ENCODE measurements at regions of chr5 and their contacts with region 1.

Region 1: GRCh38 chr5:94218374-94218773 is 400.0 kb downstream of the KIAA0825 start:
- DNase-seq: peak; percentile 42 to 63
- H3K4me3 ChIP-seq: no peak overlapping the region
- H3K4me3 Mint-ChIP-seq: peak overlapping the region; percentile 14
- H3K27ac Mint-ChIP-seq: peak overlapping the region; percentile 81
- H3K4me1 ChIP-seq: peaks cover 48% of the 10 kb centered on the region
- H3K4me1 Mint-ChIP-seq: peaks cover 46% of the 10 kb centered on the region
- H3K27me3 ChIP-seq: no peaks in the 10 kb centered on the region
- H3K27me3 Mint-ChIP-seq: no peaks in the 10 kb centered on the region
- CTCF ChIP-seq: no peak

Region 2: DNA sequence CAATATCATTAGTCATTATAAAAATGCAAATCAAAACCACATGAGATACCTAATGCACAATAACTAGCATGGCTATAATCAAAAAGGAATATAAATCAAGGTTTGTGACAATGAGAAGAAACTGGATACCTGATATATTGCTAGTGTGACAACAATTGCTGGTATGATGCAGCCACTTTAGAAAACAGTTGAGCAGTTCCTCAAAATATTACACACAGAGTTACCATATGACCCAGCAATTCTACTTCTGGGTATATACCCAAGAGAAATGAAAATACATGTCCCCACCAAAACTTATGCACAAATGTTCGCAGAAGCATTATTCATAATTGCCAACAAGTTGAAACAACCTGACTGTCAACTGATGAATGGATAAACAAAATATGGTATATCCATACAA is 137.3 kb before region 1 on chr5:
- CTCF ChIA-PET with region 1: no interaction called
- POLR2A ChIA-PET with region 1: no interaction called
- intact Hi-C with region 1: no loop called
- DNase-seq: no peak
- H3K4me3 ChIP-seq: no peak overlapping the region
- H3K4me3 Mint-ChIP-seq: no peak overlapping the region
- H3K27ac Mint-ChIP-seq: no peak overlapping the region
- H3K4me1 ChIP-seq: no peaks in the 10 kb centered on the region
- H3K4me1 Mint-ChIP-seq: no peaks in the 10 kb centered on the region
- H3K27me3 ChIP-seq: no peaks in the 10 kb centered on the region
- H3K27me3 Mint-ChIP-seq: no peaks in the 10 kb centered on the region
- CTCF ChIP-seq: no peak

Region 3: DNA sequence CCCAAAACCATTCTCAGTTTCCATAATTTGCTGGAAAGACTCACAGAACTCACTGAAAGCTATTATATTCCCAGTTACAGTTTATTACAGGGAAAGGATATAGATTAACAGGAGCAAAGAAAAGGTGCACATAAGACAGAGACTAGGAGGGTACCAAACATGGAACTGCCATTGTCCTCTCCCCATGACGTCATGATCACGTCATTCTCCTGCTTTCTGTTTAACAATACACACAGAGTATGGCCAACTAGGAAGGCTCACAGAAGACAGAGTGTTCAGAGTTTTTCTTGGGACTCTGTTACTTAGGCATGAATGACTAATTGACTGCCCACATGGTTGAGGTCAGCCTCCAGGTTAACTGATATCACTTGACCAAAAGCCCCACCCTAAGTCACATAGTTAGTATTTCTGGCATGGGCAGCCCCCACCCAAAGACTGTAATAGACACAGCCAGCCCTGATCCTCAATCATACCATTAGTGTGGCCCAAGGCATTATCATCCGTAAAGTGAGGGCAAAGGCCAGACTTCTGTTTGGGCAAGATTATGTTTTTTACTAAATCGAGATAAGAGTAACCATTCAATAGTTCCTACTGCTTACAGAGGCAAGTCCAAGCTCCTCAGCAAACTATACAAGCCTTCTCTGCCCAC is 123.5 kb before region 1 on chr5:
- CTCF ChIA-PET with region 1: no interaction called
- POLR2A ChIA-PET with region 1: no interaction called
- intact Hi-C with region 1: loop called (anchors 1 kb)
- DNase-seq: peak; percentile 86 to 93
- H3K4me3 ChIP-seq: no peak overlapping the region
- H3K4me3 Mint-ChIP-seq: peak overlapping the region; percentile 2
- H3K27ac Mint-ChIP-seq: peak overlapping the region; percentile 65
- H3K4me1 ChIP-seq: peaks cover 33% of the 10 kb centered on the region
- H3K4me1 Mint-ChIP-seq: peaks cover 29% of the 10 kb centered on the region
- H3K27me3 ChIP-seq: no peaks in the 10 kb centered on the region
- H3K27me3 Mint-ChIP-seq: no peaks in the 10 kb centered on the region
- CTCF ChIP-seq: no peak

Region 4: DNA sequence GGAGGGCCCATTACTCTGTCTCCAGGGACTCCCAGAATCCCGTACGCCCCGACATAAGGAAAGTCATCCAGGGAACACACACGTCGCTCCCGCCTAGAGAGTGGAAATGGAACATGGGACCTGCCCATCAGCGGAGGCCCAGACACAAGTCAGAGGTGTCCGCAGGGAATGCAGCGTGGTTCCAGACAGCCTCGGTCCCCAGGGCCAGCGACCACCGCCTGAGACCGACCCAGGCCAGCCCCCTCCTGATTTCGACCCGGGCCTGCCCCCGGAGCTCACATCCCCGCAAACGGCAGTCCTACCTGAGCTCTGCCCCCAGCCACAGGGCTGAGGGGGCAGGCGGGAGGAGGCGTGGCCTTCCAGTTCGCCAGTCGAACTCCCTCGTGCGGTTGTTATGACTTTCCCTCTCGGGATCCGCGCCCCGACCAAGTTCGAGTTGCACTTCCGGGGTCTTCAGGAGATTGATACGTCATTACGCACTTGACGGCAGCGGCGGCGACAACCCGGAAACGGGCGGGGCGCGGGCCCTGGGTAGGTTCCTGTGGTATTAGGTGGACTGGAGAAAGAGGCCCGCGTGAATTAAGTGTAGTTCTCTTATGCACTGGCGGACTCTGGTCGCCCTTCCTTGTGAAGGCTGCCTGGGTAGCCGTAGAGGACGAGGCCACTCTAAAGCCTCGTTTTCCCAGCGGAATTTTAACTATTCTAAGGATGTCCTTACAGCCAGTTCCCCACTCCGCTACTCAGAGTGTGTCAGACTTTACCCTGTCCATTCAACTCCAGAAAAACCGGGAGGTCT is 107.0 kb before region 1 on chr5:
- CTCF ChIA-PET with region 1: no interaction called
- POLR2A ChIA-PET with region 1: no interaction called
- intact Hi-C with region 1: loop called (anchors 5 kb)
- DNase-seq: peak; percentile 96 to 97
- H3K4me3 ChIP-seq: peak overlapping the region; percentile 86
- H3K4me3 Mint-ChIP-seq: peak overlapping the region; percentile 92
- H3K27ac Mint-ChIP-seq: peak overlapping the region; percentile 96
- H3K4me1 ChIP-seq: peaks cover 13% of the 10 kb centered on the region
- H3K4me1 Mint-ChIP-seq: peaks cover 20% of the 10 kb centered on the region
- H3K27me3 ChIP-seq: no peaks in the 10 kb centered on the region
- H3K27me3 Mint-ChIP-seq: no peaks in the 10 kb centered on the region
- CTCF ChIP-seq: peak in 1 of 2 experiments; percentile 40

Region 5: DNA sequence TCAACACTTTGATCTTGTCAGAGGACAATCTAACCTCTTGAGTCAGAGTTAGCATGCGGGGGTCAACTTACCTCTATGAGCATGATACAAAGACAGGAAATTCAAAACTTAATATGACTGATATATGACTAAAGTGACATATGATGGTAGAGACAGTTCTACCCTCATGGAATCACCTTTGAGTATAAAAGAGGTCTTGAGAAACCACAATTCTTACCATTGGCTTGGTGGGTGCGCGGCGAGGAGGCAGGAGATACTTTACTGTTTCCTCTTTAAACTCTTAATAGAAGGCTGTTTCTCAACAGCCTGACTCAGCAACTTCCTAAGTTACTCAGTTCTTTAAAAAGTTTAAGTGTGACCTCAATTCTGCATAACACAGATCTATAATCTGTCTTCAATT is 27.2 kb after region 1 on chr5:
- CTCF ChIA-PET with region 1: no interaction called
- POLR2A ChIA-PET with region 1: no interaction called
- intact Hi-C with region 1: loop called (anchors 2 kb)
- DNase-seq: no peak
- H3K4me3 ChIP-seq: no peak overlapping the region
- H3K4me3 Mint-ChIP-seq: no peak overlapping the region
- H3K27ac Mint-ChIP-seq: peak overlapping the region; percentile 6
- H3K4me1 ChIP-seq: peaks cover 29% of the 10 kb centered on the region
- H3K4me1 Mint-ChIP-seq: peaks cover 32% of the 10 kb centered on the region
- H3K27me3 ChIP-seq: no peaks in the 10 kb centered on the region
- H3K27me3 Mint-ChIP-seq: no peaks in the 10 kb centered on the region
- CTCF ChIP-seq: no peak

Region 6: DNA sequence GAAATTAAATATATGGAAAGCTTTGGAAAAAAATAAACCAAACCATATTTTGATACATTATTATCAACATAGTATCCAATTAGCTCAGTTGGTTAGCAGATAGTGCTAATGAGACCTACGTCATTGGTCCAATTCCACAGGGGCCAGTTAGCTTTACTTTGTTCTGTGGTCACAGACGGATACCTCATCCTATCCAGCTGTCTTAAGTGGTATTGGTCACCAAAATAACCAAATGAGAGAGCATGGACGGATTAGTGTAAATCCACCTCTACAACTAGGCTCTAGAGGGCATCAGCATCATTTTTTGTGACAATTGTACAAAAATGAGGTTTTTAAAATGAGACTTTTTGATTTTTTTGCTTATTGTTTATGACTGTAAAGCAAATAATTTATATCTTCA is 35.8 kb after region 1 on chr5:
- CTCF ChIA-PET with region 1: no interaction called
- POLR2A ChIA-PET with region 1: no interaction called
- intact Hi-C with region 1: loop called (anchors 1 kb)
- DNase-seq: no peak
- H3K4me3 ChIP-seq: no peak overlapping the region
- H3K4me3 Mint-ChIP-seq: no peak overlapping the region
- H3K27ac Mint-ChIP-seq: no peak overlapping the region
- H3K4me1 ChIP-seq: no peaks in the 10 kb centered on the region
- H3K4me1 Mint-ChIP-seq: peaks cover 6% of the 10 kb centered on the region
- H3K27me3 ChIP-seq: no peaks in the 10 kb centered on the region
- H3K27me3 Mint-ChIP-seq: no peaks in the 10 kb centered on the region
- CTCF ChIP-seq: no peak

Region 7: DNA sequence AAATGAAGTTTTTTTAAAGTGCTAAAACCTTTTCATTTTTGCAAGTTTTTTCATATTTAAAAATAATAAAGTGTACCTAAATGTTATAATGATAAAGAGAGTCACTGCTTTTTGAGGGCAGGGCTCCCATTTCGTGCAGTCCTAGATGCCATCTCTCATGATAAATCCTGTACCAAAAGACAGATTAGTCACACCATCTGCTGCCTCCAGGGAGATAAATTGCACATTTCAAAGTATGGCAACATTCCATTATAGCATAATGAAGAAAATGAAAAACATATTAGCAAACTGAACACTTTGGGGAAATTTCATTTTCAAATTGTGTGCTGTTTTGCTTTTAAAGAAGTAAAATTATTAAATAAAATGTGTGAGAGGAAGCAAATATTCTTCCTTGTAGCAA is 142.8 kb after region 1 on chr5:
- CTCF ChIA-PET with region 1: no interaction called
- POLR2A ChIA-PET with region 1: no interaction called
- intact Hi-C with region 1: loop called (anchors 5 kb)
- DNase-seq: no peak
- H3K4me3 ChIP-seq: no peak overlapping the region
- H3K4me3 Mint-ChIP-seq: no peak overlapping the region
- H3K27ac Mint-ChIP-seq: no peak overlapping the region
- H3K4me1 ChIP-seq: peaks cover 18% of the 10 kb centered on the region; the same call in 1 of the 2 replicates
- H3K4me1 Mint-ChIP-seq: peaks cover 8% of the 10 kb centered on the region
- H3K27me3 ChIP-seq: no peaks in the 10 kb centered on the region
- H3K27me3 Mint-ChIP-seq: no peaks in the 10 kb centered on the region
- CTCF ChIP-seq: no peak

Measured in Caco-2 (cell line).